PC-9 (cell line): ENCODE measurements at regions of chr18 and their contacts with region 1.

Region 1: DNA sequence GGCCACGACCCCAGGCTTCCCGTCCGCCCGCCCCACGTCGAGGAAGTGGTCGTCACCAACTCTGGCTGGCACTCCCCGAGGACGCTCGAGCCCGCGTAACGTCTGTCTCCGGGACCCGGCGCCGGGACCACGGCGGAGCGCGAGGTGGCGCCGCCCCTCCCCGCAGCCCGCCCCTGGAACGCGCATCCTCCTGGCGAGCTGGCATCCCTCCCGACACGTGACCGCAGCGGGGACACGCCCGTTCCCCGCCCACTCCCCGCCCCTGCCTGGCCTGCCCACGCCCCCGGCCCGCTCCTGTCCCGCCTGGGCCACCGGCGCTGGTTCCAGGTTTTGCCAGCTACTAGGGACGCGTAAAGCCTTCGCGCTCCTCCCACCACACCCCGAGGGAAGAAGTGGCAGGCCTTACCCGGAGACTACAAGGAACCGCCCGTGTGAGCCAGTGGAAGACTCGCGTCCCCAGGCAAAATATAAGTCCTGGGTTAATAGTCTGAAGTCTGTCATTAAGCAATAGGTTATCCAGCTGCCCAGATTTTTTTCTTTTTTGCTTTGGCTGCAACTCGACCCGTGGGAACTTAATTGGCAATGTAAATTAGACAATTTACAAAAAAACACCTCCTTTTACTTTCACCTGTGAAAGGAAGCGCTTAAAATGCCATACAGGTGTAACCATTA is at the start of gene OSBPL1A:
- DNase-seq: peak; percentile 78 to 89
- H3K4me3 ChIP-seq: peak within 1 kb of the TSS; percentile 71
- H3K27ac ChIP-seq: no peak within 1 kb of the TSS
- H3K4me1 ChIP-seq: peaks cover 9% of the 10 kb centered on the region; the same call in 1 of the 2 replicates
- H3K27me3 ChIP-seq: no peaks in the 10 kb centered on the region
- CTCF ChIP-seq: no peak
- total RNA-seq, gene OSBPL1A: 33.7 and 37.4 TPM in 2 replicates

Region 2: GRCh38 chr18:24362758-24363157 is 35.1 kb before region 1 on chr18:
- CTCF ChIA-PET with region 1: no interaction called
- POLR2A ChIA-PET with region 1: no interaction called
- intact Hi-C with region 1: loop called (anchors 5 kb)
- DNase-seq: peak; percentile 52 to 72
- H3K4me3 ChIP-seq: no peak overlapping the region
- H3K27ac ChIP-seq: peak overlapping the region; percentile 49
- H3K4me1 ChIP-seq: peaks cover 16% of the 10 kb centered on the region
- H3K27me3 ChIP-seq: no peaks in the 10 kb centered on the region
- CTCF ChIP-seq: no peak

Region 3: DNA sequence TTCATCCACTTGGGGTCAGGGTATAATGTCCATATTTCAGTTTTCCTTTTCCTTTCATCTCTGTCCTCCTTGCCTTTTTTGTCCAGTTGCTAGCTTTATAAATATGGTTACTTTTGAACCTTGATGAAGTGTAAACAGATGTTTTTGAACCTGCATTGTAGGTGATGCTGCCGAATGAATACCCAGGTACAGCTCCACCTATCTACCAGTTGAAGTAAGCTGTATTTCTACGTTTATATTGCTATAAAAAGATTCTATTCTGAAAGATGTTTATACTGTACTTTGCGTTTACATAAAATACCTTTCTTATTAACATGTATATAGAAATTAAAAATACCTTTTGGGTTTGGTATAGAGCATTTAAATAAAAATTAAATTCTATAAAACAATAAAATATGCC is 30.9 kb after region 1 on chr18:
- CTCF ChIA-PET with region 1: no interaction called
- POLR2A ChIA-PET with region 1: interaction called, 3 read pairs
- intact Hi-C with region 1: loop called (anchors 2 kb)
- DNase-seq: no peak
- H3K4me3 ChIP-seq: 0 out of 2 replicates have a peak overlapping the region, but pooled peaks have one; percentile 5
- H3K27ac ChIP-seq: no peak overlapping the region
- H3K4me1 ChIP-seq: peaks cover 10% of the 10 kb centered on the region
- H3K27me3 ChIP-seq: no peaks in the 10 kb centered on the region
- CTCF ChIP-seq: 0 out of 2 replicates have a peak, but pooled peaks have one; percentile 32

Region 4: GRCh38 chr18:24799176-24799575 is 401.3 kb after region 1 on chr18:
- CTCF ChIA-PET with region 1: no interaction called
- POLR2A ChIA-PET with region 1: no interaction called
- intact Hi-C with region 1: no loop called
- DNase-seq: no peak
- H3K4me3 ChIP-seq: no peak overlapping the region
- H3K27ac ChIP-seq: no peak overlapping the region
- H3K4me1 ChIP-seq: no peaks in the 10 kb centered on the region
- H3K27me3 ChIP-seq: no peaks in the 10 kb centered on the region
- CTCF ChIP-seq: no peak